CD4-positive, alpha-beta memory T cell (primary cell): ENCODE measurements at regions of chr12 and their contacts with region 1.

Region 1: GRCh38 chr12:121917979-121918678 is at the start of gene CFAP251:
- DNase-seq: peak; percentile 93 to 98 (median 94)
- H3K4me3 ChIP-seq: peak within 1 kb of the TSS; percentile 42 to 63
- H3K4me3 Mint-ChIP-seq: peak within 1 kb of the TSS; percentile 67 to 95 (median 86)
- H3K27ac ChIP-seq: peak within 1 kb of the TSS; percentile 69
- H3K27ac Mint-ChIP-seq: peak within 1 kb of the TSS; percentile 91 to 99 (median 97)
- H3K4me1 ChIP-seq: peaks cover 14% of the 10 kb centered on the region
- H3K4me1 Mint-ChIP-seq: peaks cover 5 to 13% (median 13%) of the 10 kb centered on the region in 4 donors
- H3K27me3 ChIP-seq: no peaks in the 10 kb centered on the region
- H3K27me3 Mint-ChIP-seq: no peaks in the 10 kb centered on the region
- total RNA-seq, gene CFAP251: 0.23 to 0.44 TPM

Region 2: GRCh38 chr12:121888478-121889266 is 29.5 kb before region 1 on chr12 and contains the start of gene PSMD9:
- CTCF ChIA-PET with region 1: interaction called, 6 read pairs
- POLR2A ChIA-PET with region 1: interaction called, 7 read pairs
- intact Hi-C with region 1: loop called (anchors 1 kb)
- DNase-seq: peak; percentile 97 to 99 (median 98)
- H3K4me3 ChIP-seq: peak within 1 kb of the TSS; percentile 77 to 88
- H3K4me3 Mint-ChIP-seq: peak within 1 kb of the TSS; percentile 96 to 99 (median 98)
- H3K27ac ChIP-seq: peak within 1 kb of the TSS; percentile 91
- H3K27ac Mint-ChIP-seq: peak within 1 kb of the TSS; percentile 99 to 100 (median 99)
- H3K4me1 ChIP-seq: peaks cover 29% of the 10 kb centered on the region
- H3K4me1 Mint-ChIP-seq: peaks cover 19 to 43% (median 33%) of the 10 kb centered on the region in 4 donors
- H3K27me3 ChIP-seq: no peaks in the 10 kb centered on the region
- H3K27me3 Mint-ChIP-seq: peaks cover 0 to 3% of the 10 kb centered on the region in 2 donors
- total RNA-seq, gene PSMD9: 41.4 to 42.7 TPM

Region 3: GRCh38 chr12:121937654-121938053 is 19.5 kb after region 1 on chr12:
- CTCF ChIA-PET with region 1: no interaction called
- POLR2A ChIA-PET with region 1: no interaction called
- intact Hi-C with region 1: no loop called
- DNase-seq: no peak
- H3K4me3 ChIP-seq: no peak overlapping the region
- H3K4me3 Mint-ChIP-seq: no peak overlapping the region
- H3K27ac ChIP-seq: no peak overlapping the region
- H3K27ac Mint-ChIP-seq: no peak overlapping the region
- H3K4me1 ChIP-seq: no peaks in the 10 kb centered on the region
- H3K4me1 Mint-ChIP-seq: peaks cover 0 to 3% (median 1%) of the 10 kb centered on the region in 4 donors
- H3K27me3 ChIP-seq: no peaks in the 10 kb centered on the region
- H3K27me3 Mint-ChIP-seq: no peaks in the 10 kb centered on the region

Region 4: DNA sequence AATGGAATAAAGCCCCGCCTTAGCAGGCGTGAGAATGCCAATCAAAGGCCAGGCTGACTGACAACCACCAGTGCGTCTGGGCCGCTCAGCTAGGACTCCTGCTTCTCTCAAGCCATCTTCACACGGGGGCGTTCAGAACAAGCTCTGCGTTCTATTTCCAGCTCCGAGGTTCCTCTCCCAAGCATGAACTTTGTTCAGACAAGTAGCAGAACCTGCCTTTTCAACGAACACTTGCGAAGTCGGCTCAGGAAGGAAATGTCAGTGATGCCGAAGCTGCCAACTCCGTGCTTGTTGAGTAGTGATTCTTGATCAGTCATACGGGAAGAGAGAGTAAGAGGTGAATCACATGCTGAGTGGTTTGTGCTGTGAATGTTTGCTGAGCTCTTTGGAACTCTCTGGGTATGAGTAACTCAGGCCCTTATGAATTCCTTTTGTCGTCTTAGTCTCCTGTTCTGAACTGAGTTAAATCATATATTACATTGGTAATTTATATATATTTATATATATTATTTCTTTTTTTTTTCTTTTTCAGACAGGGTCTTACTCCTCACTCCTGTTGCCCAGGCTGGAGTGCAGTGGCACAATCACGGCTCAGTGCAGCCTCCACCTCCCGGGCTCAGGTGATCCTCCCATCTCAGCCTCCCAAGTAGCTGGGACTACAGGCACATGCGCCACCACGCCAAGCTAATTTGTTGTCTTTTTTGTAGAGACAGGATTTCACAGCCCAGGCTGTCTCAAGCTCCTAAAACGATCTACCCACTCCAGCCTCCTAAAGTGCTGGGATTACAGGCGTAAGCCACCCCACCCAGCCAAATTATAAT is 74.1 kb after region 1 on chr12:
- CTCF ChIA-PET with region 1: interaction called, 10 read pairs
- POLR2A ChIA-PET with region 1: no interaction called
- intact Hi-C with region 1: no loop called
- DNase-seq: peak in 3 of 5 donors; percentile 11 to 27 (median 13)
- H3K4me3 ChIP-seq: no peak overlapping the region
- H3K4me3 Mint-ChIP-seq: peak overlapping the region in 4 of 8 donors; percentile 33 to 63 (median 46)
- H3K27ac ChIP-seq: no peak overlapping the region
- H3K27ac Mint-ChIP-seq: peak overlapping the region in 5 of 7 donors; percentile 73 to 80 (median 77)
- H3K4me1 ChIP-seq: no peaks in the 10 kb centered on the region
- H3K4me1 Mint-ChIP-seq: peaks cover 4 to 11% (median 5%) of the 10 kb centered on the region in 4 donors
- H3K27me3 ChIP-seq: no peaks in the 10 kb centered on the region
- H3K27me3 Mint-ChIP-seq: peaks cover 0 to 2% of the 10 kb centered on the region in 2 donors

Region 5: GRCh38 chr12:122006186-122006926 is 88.2 kb after region 1 on chr12:
- CTCF ChIA-PET with region 1: interaction called, 16 read pairs
- POLR2A ChIA-PET with region 1: interaction called, 5 read pairs
- intact Hi-C with region 1: no loop called
- DNase-seq: peak in 4 of 5 donors; percentile 16 to 30 (median 20)
- H3K4me3 ChIP-seq: peak overlapping the region in 1 of 2 donors; percentile 28
- H3K4me3 Mint-ChIP-seq: peak overlapping the region; percentile 69 to 85 (median 78)
- H3K27ac ChIP-seq: no peak overlapping the region
- H3K27ac Mint-ChIP-seq: peak overlapping the region; percentile 26 to 87 (median 57)
- H3K4me1 ChIP-seq: peaks cover 40% of the 10 kb centered on the region
- H3K4me1 Mint-ChIP-seq: peaks cover 13 to 39% (median 18%) of the 10 kb centered on the region in 4 donors
- H3K27me3 ChIP-seq: no peaks in the 10 kb centered on the region
- H3K27me3 Mint-ChIP-seq: peaks cover 1 to 5% of the 10 kb centered on the region in 2 donors

Region 6: DNA sequence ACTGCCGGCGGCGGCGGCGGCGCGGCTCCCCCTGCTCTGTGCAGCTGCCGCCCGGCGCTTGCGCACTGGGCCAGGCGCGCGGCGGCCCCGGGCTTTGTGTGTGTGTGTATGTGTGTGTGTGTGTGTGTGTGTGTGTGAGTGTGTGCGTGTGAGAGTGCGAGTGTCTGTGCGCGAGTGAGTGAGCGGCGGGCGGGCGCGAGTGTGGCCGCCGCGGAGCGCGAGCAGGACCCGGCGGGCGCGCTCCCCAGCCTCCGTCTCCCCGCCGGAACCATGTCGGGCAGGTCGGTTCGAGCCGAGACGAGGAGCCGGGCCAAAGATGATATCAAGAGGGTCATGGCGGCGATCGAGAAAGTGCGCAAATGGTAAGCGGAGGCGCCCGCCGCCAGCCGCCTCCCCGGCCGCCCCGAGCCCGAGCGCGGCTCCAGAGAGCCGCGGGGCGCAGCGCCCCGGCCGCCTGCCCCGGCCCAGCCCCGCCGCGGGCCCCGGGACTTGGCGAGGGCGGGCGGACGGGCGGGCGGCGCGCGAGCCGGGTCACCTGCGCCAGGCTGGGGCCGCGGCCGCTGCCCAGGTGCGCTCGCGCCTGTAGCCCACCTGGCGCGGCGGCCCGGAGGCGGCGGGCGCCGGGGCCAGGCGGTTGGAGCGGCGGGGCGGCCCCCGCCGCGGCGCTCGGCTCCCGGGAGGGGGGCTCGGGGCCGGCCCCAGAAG is 103.8 kb after region 1 on chr12 and contains the start of gene BCL7A:
- CTCF ChIA-PET with region 1: interaction called, 3 read pairs
- POLR2A ChIA-PET with region 1: no interaction called
- intact Hi-C with region 1: loop called (anchors 5 kb)
- DNase-seq: peak; percentile 56 to 66 (median 60)
- H3K4me3 ChIP-seq: peak within 1 kb of the TSS in 1 of 2 donors; percentile 47
- H3K4me3 Mint-ChIP-seq: peak within 1 kb of the TSS; percentile 84 to 95 (median 89)
- H3K27ac ChIP-seq: no peak within 1 kb of the TSS
- H3K27ac Mint-ChIP-seq: peak within 1 kb of the TSS; percentile 57 to 97 (median 74)
- H3K4me1 ChIP-seq: peaks cover 14% of the 10 kb centered on the region
- H3K4me1 Mint-ChIP-seq: peaks cover 4 to 12% (median 5%) of the 10 kb centered on the region in 4 donors
- H3K27me3 ChIP-seq: no peaks in the 10 kb centered on the region
- H3K27me3 Mint-ChIP-seq: peaks cover 3 to 5% of the 10 kb centered on the region in 2 donors
- total RNA-seq, gene BCL7A: 3.0 to 3.7 TPM

Region 7: GRCh38 chr12:122031342-122032216 is 113.5 kb after region 1 on chr12:
- CTCF ChIA-PET with region 1: interaction called, 12 read pairs
- POLR2A ChIA-PET with region 1: no interaction called
- intact Hi-C with region 1: no loop called
- DNase-seq: peak in 2 of 5 donors; percentile 19 to 24
- H3K4me3 ChIP-seq: no peak overlapping the region
- H3K4me3 Mint-ChIP-seq: no peak overlapping the region
- H3K27ac ChIP-seq: no peak overlapping the region
- H3K27ac Mint-ChIP-seq: peak overlapping the region in 1 of 7 donors; percentile 30
- H3K4me1 ChIP-seq: no peaks in the 10 kb centered on the region
- H3K4me1 Mint-ChIP-seq: peaks cover 1 to 8% (median 3%) of the 10 kb centered on the region in 4 donors
- H3K27me3 ChIP-seq: no peaks in the 10 kb centered on the region
- H3K27me3 Mint-ChIP-seq: peaks cover 0 to 4% of the 10 kb centered on the region in 2 donors